Tibial artery (tissue), 4 donors: ENCODE measurements at regions of chr14 and their contacts with region 1.

Region 1: DNA sequence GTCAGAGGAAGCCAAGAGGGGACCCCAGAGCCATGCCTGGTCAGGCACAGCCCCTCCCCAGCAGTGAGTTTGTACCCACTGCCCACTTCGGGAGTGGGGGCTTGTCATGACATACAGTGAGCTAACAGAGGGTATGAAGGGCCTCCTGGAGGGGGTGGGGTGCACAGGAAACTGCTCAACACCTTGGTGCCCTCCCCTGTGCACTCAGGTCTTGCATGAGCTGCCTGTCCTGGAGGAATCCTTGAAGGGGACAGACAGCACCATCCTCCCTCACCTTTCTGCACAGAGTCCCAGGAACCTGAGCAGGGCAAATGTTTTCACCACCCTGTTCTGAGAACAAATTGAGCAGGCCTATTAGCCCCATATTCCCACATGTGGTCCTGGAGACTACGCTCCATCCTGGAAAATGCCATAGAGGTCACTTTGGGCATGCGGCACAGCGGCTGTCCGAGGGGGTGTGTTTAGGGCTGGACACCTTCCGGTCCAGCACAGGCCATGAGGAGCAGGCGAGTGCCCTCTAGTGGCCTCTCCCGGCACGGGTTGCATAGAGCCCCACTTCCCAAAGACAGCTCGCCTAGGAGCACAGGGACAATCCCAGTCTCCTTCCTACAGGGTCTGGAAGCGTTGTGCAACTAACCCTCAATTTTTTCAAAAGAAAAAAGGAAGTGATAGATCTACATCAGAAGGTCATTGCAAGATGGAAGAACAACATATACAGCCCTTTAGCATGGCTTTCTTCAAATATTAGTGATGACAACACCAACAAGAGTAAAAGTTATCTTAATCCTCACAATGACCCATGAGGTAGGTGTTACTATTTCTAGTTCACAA is 31.9 kb upstream of the ZFP36L1 start:
- DNase-seq: peak; percentile 86 to 90
- H3K4me3 ChIP-seq: no peak overlapping the region
- H3K27ac ChIP-seq: no peak overlapping the region
- H3K4me1 ChIP-seq: peaks cover 0 to 8% (median 3%) of the 10 kb centered on the region in 4 donors
- H3K27me3 ChIP-seq: no peaks in the 10 kb centered on the region
- CTCF ChIP-seq: peak; percentile 82 to 96

Region 2: GRCh38 chr14:67934008-67934481 is 890.7 kb before region 1 on chr14:
- intact Hi-C with region 1: loop called (anchors 5 kb)
- DNase-seq: no peak
- H3K4me3 ChIP-seq: no peak overlapping the region
- H3K27ac ChIP-seq: peak overlapping the region; percentile 10 to 14
- H3K4me1 ChIP-seq: no peaks in the 10 kb centered on the region
- H3K27me3 ChIP-seq: no peaks in the 10 kb centered on the region
- CTCF ChIP-seq: peak; percentile 68 to 94